ENCODE measurements at regions of chr5 and their contacts with region 1.

Region 1: DNA sequence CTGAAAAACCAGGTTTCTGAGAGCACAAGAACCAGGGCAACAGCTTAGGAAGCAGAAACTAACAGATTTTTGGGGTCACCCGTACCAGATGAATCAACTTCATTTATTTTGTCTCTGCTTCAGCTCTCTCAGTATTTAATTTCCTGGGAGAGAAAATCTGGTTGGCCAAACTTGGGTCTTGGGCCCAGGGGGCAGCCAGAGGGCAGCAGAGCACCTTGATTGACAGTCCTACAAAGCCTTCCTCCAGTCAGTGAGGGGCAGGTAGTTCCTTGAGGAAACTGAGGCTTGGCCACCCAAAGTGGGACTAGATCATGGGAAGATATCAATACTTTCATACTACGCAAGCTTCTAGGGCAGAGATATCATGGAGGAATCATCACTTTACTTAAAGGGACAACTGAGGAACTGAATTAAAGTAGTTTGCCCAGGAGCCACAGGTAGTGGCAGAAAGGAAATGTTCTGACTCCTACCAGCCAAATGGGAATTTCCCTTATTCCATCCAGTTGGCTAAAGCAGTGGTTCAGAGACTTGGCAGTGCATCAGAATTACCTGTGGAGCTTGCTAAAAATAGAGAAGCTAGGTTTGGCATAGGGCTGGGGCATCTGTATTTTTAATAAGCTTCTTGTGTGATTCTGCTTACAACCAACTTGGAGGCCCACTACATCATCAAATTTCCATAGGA is 21.5 kb upstream of the ARHGAP26 start:
- DNase-seq: peak; percentile 16 to 77 (median 61)
- ATAC-seq: peak; percentile 61
- H3K4me3 ChIP-seq: no peak overlapping the region
- H3K4me3 Mint-ChIP-seq: no peak overlapping the region
- H3K27ac ChIP-seq: no peak overlapping the region
- H3K27ac Mint-ChIP-seq: no peak overlapping the region
- H3K4me1 ChIP-seq: no peaks in the 10 kb centered on the region
- H3K4me1 Mint-ChIP-seq: peaks cover 2% of the 10 kb centered on the region
- H3K27me3 ChIP-seq: no peaks in the 10 kb centered on the region
- H3K27me3 Mint-ChIP-seq: peaks cover 2% of the 10 kb centered on the region
- CTCF ChIP-seq: peak; percentile 66

Region 2: DNA sequence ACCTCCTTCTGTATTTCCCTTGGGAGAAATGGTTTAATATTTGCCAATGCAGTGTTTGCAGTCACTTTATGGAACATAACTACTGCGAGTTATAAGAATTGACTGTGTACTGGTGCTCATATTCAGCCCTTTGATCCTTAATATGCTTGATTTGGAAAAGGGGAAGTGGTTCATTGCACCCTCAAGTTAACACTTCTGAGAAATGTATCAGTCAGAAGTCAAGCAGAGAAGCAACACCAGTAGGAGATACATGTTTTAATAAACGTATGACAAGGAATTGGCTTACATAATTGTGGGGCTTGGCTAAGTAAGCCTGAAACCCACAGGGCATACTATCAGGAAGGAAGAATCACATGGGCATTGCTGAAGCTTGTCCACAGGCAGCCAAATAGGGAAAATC is 292.9 kb before region 1 on chr5:
- CTCF ChIA-PET with region 1: no interaction called
- POLR2A ChIA-PET with region 1: no interaction called
- intact Hi-C with region 1: no loop called
- DNase-seq: no peak
- ATAC-seq: no peak
- H3K4me3 ChIP-seq: no peak overlapping the region
- H3K4me3 Mint-ChIP-seq: no peak overlapping the region
- H3K27ac ChIP-seq: no peak overlapping the region
- H3K27ac Mint-ChIP-seq: no peak overlapping the region
- H3K4me1 ChIP-seq: no peaks in the 10 kb centered on the region
- H3K4me1 Mint-ChIP-seq: peaks cover 8% of the 10 kb centered on the region
- H3K27me3 ChIP-seq: no peaks in the 10 kb centered on the region
- H3K27me3 Mint-ChIP-seq: peaks cover 4% of the 10 kb centered on the region
- CTCF ChIP-seq: no peak

Region 3: GRCh38 chr5:142713121-142713706 is 35.5 kb before region 1 on chr5:
- CTCF ChIA-PET with region 1: interaction called, 101 read pairs
- POLR2A ChIA-PET with region 1: no interaction called
- intact Hi-C with region 1: loop called in 1 of 2 experiments (anchors 2 kb)
- DNase-seq: peak; percentile 70 to 93 (median 83)
- ATAC-seq: peak; percentile 95
- H3K4me3 ChIP-seq: peak overlapping the region; percentile 61 to 82
- H3K4me3 Mint-ChIP-seq: peak overlapping the region; percentile 76
- H3K27ac ChIP-seq: peak overlapping the region in 1 of 2 experiments; percentile 49
- H3K27ac Mint-ChIP-seq: peak overlapping the region; percentile 45
- H3K4me1 ChIP-seq: peaks cover 4% of the 10 kb centered on the region
- H3K4me1 Mint-ChIP-seq: peaks cover 18% of the 10 kb centered on the region
- H3K27me3 ChIP-seq: no peaks in the 10 kb centered on the region
- H3K27me3 Mint-ChIP-seq: no peaks in the 10 kb centered on the region
- CTCF ChIP-seq: peak; percentile 98

Region 4: GRCh38 chr5:142769741-142770631 is 21.3 kb after region 1 on chr5 and contains the start of gene ARHGAP26:
- CTCF ChIA-PET with region 1: interaction called, 126 read pairs
- POLR2A ChIA-PET with region 1: interaction called, 5 read pairs
- intact Hi-C with region 1: loop called in 1 of 2 experiments (anchors 1 kb)
- DNase-seq: peak; percentile 87 to 97 (median 92)
- ATAC-seq: peak; percentile 85
- H3K4me3 ChIP-seq: peak within 1 kb of the TSS; percentile 96 to 98
- H3K4me3 Mint-ChIP-seq: peak within 1 kb of the TSS; percentile 95
- H3K27ac ChIP-seq: peak within 1 kb of the TSS; percentile 74 to 78
- H3K27ac Mint-ChIP-seq: peak within 1 kb of the TSS; percentile 93
- H3K4me1 ChIP-seq: peaks cover 27% of the 10 kb centered on the region
- H3K4me1 Mint-ChIP-seq: peaks cover 45% of the 10 kb centered on the region
- H3K27me3 ChIP-seq: no peaks in the 10 kb centered on the region
- H3K27me3 Mint-ChIP-seq: no peaks in the 10 kb centered on the region
- CTCF ChIP-seq: no peak
- total RNA-seq, gene ARHGAP26: 46.0 to 46.6 TPM

Region 5: GRCh38 chr5:142845402-142845921 is 96.8 kb after region 1 on chr5:
- CTCF ChIA-PET with region 1: interaction called, 12 read pairs
- POLR2A ChIA-PET with region 1: no interaction called
- intact Hi-C with region 1: no loop called
- DNase-seq: peak in 4 of 9 experiments; percentile 17 to 60 (median 50)
- ATAC-seq: peak; percentile 65
- H3K4me3 ChIP-seq: no peak overlapping the region
- H3K4me3 Mint-ChIP-seq: peak overlapping the region; percentile 57
- H3K27ac ChIP-seq: peak overlapping the region in 1 of 2 experiments; percentile 55
- H3K27ac Mint-ChIP-seq: peak overlapping the region; percentile 92
- H3K4me1 ChIP-seq: peaks cover 24% of the 10 kb centered on the region
- H3K4me1 Mint-ChIP-seq: peaks cover 90% of the 10 kb centered on the region
- H3K27me3 ChIP-seq: no peaks in the 10 kb centered on the region
- H3K27me3 Mint-ChIP-seq: no peaks in the 10 kb centered on the region
- CTCF ChIP-seq: no peak

Region 6: GRCh38 chr5:142874537-142874936 is 125.8 kb after region 1 on chr5:
- CTCF ChIA-PET with region 1: interaction called, 269 read pairs
- POLR2A ChIA-PET with region 1: interaction called, 5 read pairs
- intact Hi-C with region 1: no loop called
- DNase-seq: no peak
- ATAC-seq: no peak
- H3K4me3 ChIP-seq: no peak overlapping the region
- H3K4me3 Mint-ChIP-seq: no peak overlapping the region
- H3K27ac ChIP-seq: no peak overlapping the region
- H3K27ac Mint-ChIP-seq: no peak overlapping the region
- H3K4me1 ChIP-seq: no peaks in the 10 kb centered on the region
- H3K4me1 Mint-ChIP-seq: peaks cover 9% of the 10 kb centered on the region
- H3K27me3 ChIP-seq: no peaks in the 10 kb centered on the region
- H3K27me3 Mint-ChIP-seq: no peaks in the 10 kb centered on the region
- CTCF ChIP-seq: no peak

Region 7: DNA sequence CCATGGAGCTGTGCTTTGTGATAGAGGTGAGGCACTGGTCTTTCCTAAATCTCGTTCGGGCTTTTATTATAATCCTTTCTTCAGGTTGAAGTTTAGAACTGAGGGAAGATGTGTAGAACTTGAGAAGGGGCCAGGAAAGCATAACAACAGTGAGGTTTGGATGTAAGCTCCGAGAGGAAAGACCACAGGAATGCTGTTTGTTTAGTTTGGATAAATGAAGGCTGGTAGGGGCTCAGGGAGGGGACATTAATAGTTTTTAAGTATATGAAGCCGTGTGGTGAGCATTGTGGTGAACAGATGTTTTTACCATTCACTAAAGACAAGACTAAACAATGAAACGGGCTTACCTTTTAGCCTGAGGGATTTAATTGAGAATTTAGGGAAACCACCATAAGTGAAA is 152.2 kb after region 1 on chr5:
- CTCF ChIA-PET with region 1: interaction called, 10 read pairs
- POLR2A ChIA-PET with region 1: no interaction called
- intact Hi-C with region 1: no loop called
- DNase-seq: no peak
- ATAC-seq: no peak
- H3K4me3 ChIP-seq: no peak overlapping the region
- H3K4me3 Mint-ChIP-seq: no peak overlapping the region
- H3K27ac ChIP-seq: no peak overlapping the region
- H3K27ac Mint-ChIP-seq: no peak overlapping the region
- H3K4me1 ChIP-seq: no peaks in the 10 kb centered on the region
- H3K4me1 Mint-ChIP-seq: peaks cover 2% of the 10 kb centered on the region
- H3K27me3 ChIP-seq: no peaks in the 10 kb centered on the region
- H3K27me3 Mint-ChIP-seq: no peaks in the 10 kb centered on the region
- CTCF ChIP-seq: no peak

Region 8: DNA sequence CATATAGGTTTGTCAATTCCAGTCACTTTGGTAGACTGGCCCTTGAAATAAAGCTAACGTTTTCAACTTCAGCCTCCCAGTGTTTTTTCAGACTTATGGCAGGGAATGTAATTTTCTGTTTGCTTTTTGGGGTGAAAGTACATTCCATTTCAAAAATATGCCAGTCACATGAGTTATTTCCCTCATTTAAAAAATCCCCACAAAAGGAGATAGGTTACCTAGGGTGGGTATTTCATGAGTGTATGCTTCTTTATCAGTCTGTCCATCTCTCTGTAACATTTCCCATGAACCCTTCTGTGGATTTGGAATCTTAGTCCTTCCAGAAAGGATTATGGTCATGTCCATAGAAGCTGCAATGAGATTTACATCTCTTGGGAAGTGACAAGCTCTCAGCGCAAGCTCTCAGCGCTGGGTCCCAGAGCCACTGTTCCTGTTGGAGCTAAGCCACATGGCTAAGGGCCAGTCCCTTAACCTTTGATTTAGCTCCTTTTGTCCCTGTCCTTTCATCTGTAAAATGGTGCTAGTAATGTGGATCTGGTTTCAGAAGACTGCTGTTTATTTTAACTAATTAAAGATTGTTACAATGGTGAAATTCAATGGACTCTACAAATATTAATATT is 359.9 kb after region 1 on chr5:
- CTCF ChIA-PET with region 1: no interaction called
- POLR2A ChIA-PET with region 1: no interaction called
- intact Hi-C with region 1: no loop called
- DNase-seq: no peak
- ATAC-seq: no peak
- H3K4me3 ChIP-seq: no peak overlapping the region
- H3K4me3 Mint-ChIP-seq: no peak overlapping the region
- H3K27ac ChIP-seq: no peak overlapping the region
- H3K27ac Mint-ChIP-seq: no peak overlapping the region
- H3K4me1 ChIP-seq: no peaks in the 10 kb centered on the region
- H3K4me1 Mint-ChIP-seq: peaks cover 8% of the 10 kb centered on the region
- H3K27me3 ChIP-seq: no peaks in the 10 kb centered on the region
- H3K27me3 Mint-ChIP-seq: no peaks in the 10 kb centered on the region
- CTCF ChIP-seq: no peak

Measured in CD8-positive, alpha-beta T cell (primary cell).